ENCODE measurements at regions of chr1 and their contacts with region 1.

Region 1: DNA sequence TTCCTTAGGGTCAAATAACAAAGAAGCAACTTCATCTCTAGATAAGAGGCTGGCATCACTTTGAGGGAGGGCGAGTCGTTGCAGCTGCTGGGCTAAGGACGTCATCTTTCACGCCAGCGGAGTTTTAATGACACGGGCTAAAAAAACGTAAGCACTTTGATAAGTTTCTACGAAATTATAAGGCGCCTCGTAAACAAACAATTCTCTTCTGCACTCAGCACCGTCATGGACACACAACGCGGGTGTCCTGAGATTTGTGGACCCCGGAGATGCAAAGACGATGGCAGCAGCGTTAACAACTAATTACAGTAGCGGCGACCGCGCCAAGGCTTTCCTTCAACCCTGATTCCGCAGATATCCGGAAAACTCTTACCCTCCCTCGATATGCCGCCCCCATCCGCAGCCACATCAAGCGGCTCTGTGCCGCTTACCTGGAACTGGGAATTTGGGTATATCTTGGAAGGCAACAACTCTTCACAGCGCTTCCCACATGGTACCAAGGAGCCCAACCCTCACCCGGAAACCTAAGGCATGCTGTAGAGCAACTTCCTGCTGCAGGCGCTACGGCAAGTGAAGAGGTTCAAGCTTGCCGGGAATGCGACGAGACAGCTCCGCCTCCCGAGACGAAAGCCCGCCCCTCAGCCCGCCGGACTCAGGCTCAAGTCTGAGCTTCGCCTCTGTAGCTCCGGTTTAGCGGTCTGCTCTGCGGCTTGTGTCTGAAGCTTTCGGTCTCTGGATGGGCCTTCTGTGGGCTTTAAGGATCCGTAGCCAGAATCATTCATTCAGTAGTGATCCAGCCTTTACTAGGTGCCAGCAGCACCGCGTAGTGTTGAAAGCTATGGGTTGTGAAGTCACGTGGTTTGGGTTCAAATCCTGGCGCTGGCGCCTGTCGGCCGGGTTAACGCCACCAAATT is at the start of gene HEATR1:
- DNase-seq: peak; percentile 62 to 96
- H3K4me3 ChIP-seq: peak within 1 kb of the TSS; percentile 73 to 79
- H3K27ac ChIP-seq: peak within 1 kb of the TSS; percentile 83
- H3K4me1 ChIP-seq: peaks cover 3 to 8% of the 10 kb centered on the region in 2 donors
- H3K27me3 ChIP-seq: no peaks in the 10 kb centered on the region
- CTCF ChIP-seq: no peak
- total RNA-seq, gene HEATR1: 14.2 TPM

Region 2: GRCh38 chr1:236673289-236673919 is 69.2 kb after region 1 on chr1:
- intact Hi-C with region 1: loop called (anchors 5 kb)
- DNase-seq: no peak
- H3K4me3 ChIP-seq: peak overlapping the region; percentile 26 to 34
- H3K27ac ChIP-seq: peak overlapping the region; percentile 65 to 68
- H3K4me1 ChIP-seq: peaks cover 0 to 11% of the 10 kb centered on the region in 2 donors
- H3K27me3 ChIP-seq: no peaks in the 10 kb centered on the region
- CTCF ChIP-seq: no peak

Region 3: DNA sequence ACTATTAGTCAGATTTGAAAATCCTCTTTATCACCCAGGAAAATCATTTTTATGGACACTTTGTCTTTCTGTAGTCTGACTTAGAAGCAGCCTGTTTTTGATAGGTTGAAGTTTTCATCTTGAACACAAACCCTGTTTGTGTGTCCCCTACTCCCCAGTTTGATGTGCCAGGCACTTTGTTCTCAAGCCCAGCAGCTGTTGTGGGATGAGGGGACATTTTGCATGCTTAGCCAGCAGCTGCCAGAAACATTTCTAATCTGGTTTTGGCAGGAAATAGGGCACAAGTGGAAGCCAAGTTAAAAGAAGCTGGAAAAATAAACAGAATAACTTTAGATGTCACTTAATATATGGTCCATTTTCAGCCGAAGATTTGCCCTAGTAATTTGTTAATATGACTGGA is 111.9 kb after region 1 on chr1:
- intact Hi-C with region 1: loop called (anchors 5 kb)
- DNase-seq: no peak
- H3K4me3 ChIP-seq: no peak overlapping the region
- H3K27ac ChIP-seq: peak overlapping the region; percentile 41 to 48
- H3K4me1 ChIP-seq: peaks cover 3 to 20% of the 10 kb centered on the region in 2 donors
- H3K27me3 ChIP-seq: no peaks in the 10 kb centered on the region
- CTCF ChIP-seq: no peak

Region 4: GRCh38 chr1:236727521-236727920 is 123.3 kb after region 1 on chr1:
- intact Hi-C with region 1: no loop called
- DNase-seq: no peak
- H3K4me3 ChIP-seq: no peak overlapping the region
- H3K27ac ChIP-seq: no peak overlapping the region
- H3K4me1 ChIP-seq: no peaks in the 10 kb centered on the region
- H3K27me3 ChIP-seq: no peaks in the 10 kb centered on the region
- CTCF ChIP-seq: no peak

Region 5: GRCh38 chr1:236795035-236795756 is 190.9 kb after region 1 on chr1 and contains the start of gene MTR:
- intact Hi-C with region 1: loop called (anchors 1 kb)
- DNase-seq: peak; percentile 95 to 99
- H3K4me3 ChIP-seq: peak within 1 kb of the TSS; percentile 89 to 96
- H3K27ac ChIP-seq: peak within 1 kb of the TSS; percentile 92 to 97
- H3K4me1 ChIP-seq: peaks cover 0 to 25% of the 10 kb centered on the region in 2 donors
- H3K27me3 ChIP-seq: no peaks in the 10 kb centered on the region
- CTCF ChIP-seq: no peak
- total RNA-seq, gene MTR: 36.1 TPM

Region 6: GRCh38 chr1:236844499-236845271 is 240.4 kb after region 1 on chr1:
- intact Hi-C with region 1: no loop called
- DNase-seq: no peak
- H3K4me3 ChIP-seq: no peak overlapping the region
- H3K27ac ChIP-seq: no peak overlapping the region
- H3K4me1 ChIP-seq: no peaks in the 10 kb centered on the region
- H3K27me3 ChIP-seq: no peaks in the 10 kb centered on the region
- CTCF ChIP-seq: no peak

Measured in ascending aorta (tissue), 2 donors.